WTC11 (cell line): ENCODE measurements at regions of chr7 and their contacts with region 1.

Region 1: DNA sequence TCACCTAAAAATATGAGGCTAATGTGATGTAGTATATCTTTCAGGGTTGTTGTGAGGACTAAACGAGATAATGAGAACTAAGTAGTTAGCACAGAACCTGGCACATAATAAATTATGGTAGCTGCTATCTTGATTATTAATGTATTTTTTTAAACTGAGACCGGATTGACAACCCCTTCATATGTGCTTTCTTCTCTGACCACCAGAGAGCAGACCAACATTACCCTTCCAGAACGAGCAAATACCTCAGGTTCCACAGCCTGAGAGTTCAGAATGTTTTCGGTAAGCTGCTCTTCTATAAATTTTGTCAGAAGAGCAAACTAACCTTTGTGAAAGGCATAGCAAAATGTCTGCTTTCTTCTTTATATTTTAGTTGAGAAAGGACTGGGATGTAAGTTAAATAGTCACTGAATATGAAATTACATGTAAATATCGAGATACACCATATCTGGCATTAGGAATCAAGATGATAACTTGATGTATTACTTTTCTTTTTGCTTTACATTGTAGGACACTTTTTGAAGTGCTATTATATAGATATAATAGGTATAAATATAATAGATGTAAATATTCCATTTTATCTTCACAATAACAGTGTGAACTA is 13.6 kb upstream of the BPGM start:
- DNase-seq: no peak
- ATAC-seq: peak; percentile 82
- H3K4me3 Mint-ChIP-seq: no peak overlapping the region
- H3K27ac Mint-ChIP-seq: no peak overlapping the region
- H3K4me1 Mint-ChIP-seq: no peaks in the 10 kb centered on the region
- H3K27me3 Mint-ChIP-seq: peaks cover 3% of the 10 kb centered on the region
- CTCF ChIP-seq: peak; percentile 37

Region 2: DNA sequence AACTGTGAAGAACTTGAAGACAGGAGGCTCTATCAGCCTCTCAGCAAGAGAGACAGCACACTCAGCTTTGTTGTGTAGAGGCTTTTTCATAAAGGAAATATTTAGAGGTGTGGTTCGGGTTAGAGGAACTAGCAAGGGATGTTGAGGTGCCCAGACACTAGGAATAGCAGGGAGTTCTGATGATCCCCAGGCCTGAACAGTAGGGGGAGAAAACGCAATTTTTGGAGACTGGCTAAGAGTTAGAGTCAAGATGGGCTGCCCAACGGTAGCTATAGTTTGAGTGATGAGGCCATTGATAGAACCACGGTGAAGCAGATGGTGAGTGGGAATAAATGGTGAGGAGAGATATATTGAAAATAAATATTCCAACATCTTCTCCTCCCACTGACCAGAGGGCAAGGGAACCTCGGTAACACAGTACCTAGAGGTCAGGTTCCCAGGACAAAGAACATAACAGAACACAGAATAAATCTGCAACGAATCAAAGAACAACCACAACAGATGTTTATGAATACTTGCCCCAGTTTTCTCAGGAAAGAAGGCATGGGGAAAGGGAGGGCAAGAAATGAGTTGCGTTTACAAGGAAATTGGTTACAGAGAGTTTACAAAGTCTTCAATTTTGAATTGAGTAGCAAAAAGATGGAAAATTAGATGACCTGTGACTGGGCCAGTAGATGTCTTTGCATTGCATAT is 10.6 kb before region 1 on chr7:
- CTCF ChIA-PET with region 1: interaction called, 17 read pairs
- POLR2A ChIA-PET with region 1: no interaction called
- DNase-seq: no peak
- ATAC-seq: peak; percentile 61
- H3K4me3 Mint-ChIP-seq: no peak overlapping the region
- H3K27ac Mint-ChIP-seq: no peak overlapping the region
- H3K4me1 Mint-ChIP-seq: peaks cover 6% of the 10 kb centered on the region; the same call in 1 of the 2 replicates
- H3K27me3 Mint-ChIP-seq: peaks cover 2% of the 10 kb centered on the region
- CTCF ChIP-seq: no peak

Region 3: DNA sequence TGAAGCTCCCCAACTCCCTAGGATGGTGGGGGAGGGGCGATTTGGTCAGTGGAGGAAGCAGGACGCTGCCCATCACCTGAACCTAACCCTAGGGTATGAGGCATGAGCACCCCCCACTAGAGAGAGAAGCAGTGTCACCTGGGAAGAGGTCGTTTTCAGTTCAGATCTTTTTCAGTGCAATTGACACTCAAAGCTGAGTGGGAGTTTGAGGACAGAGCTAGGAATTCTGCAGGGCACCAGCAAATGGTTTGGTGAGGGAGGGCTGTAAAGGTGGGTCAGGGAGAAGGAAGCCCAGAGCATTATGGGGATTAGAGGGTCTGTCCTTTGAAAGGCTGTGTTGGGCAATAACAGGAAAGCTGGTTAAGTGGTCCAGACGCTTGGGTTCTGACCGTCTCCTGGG is 24.5 kb after region 1 on chr7:
- CTCF ChIA-PET with region 1: interaction called, 13 read pairs
- POLR2A ChIA-PET with region 1: no interaction called
- DNase-seq: peak; percentile 15
- ATAC-seq: peak; percentile 39
- H3K4me3 Mint-ChIP-seq: no peak overlapping the region
- H3K27ac Mint-ChIP-seq: peak overlapping the region; percentile 28; the same call in 1 of the 2 replicates
- H3K4me1 Mint-ChIP-seq: peaks cover 14% of the 10 kb centered on the region
- H3K27me3 Mint-ChIP-seq: no peaks in the 10 kb centered on the region
- CTCF ChIP-seq: no peak

Region 4: DNA sequence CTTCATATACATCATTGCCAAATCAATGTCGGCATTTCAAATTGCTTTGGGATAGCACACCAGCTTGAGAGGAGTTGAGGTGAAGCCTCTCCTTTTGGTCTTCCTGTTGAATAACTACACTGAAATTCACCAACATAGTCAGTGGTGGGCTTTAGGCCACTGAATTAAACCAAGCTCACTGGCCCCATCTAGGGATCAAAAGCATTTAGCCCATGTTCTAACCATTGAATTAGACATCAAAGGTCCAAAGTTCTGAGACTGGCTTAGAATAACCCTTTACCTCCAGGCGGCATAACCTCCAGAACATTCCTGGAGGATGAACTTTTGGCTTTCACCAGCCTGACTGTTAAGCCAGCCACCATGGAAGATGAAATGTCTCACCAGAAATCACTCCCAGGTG is 68.2 kb after region 1 on chr7:
- CTCF ChIA-PET with region 1: interaction called, 18 read pairs
- POLR2A ChIA-PET with region 1: no interaction called
- DNase-seq: no peak
- ATAC-seq: peak; percentile 72
- H3K4me3 Mint-ChIP-seq: no peak overlapping the region
- H3K27ac Mint-ChIP-seq: no peak overlapping the region
- H3K4me1 Mint-ChIP-seq: peaks cover 24% of the 10 kb centered on the region
- H3K27me3 Mint-ChIP-seq: no peaks in the 10 kb centered on the region
- CTCF ChIP-seq: 0 out of 2 replicates have a peak, but pooled peaks have one; percentile 32

Region 5: DNA sequence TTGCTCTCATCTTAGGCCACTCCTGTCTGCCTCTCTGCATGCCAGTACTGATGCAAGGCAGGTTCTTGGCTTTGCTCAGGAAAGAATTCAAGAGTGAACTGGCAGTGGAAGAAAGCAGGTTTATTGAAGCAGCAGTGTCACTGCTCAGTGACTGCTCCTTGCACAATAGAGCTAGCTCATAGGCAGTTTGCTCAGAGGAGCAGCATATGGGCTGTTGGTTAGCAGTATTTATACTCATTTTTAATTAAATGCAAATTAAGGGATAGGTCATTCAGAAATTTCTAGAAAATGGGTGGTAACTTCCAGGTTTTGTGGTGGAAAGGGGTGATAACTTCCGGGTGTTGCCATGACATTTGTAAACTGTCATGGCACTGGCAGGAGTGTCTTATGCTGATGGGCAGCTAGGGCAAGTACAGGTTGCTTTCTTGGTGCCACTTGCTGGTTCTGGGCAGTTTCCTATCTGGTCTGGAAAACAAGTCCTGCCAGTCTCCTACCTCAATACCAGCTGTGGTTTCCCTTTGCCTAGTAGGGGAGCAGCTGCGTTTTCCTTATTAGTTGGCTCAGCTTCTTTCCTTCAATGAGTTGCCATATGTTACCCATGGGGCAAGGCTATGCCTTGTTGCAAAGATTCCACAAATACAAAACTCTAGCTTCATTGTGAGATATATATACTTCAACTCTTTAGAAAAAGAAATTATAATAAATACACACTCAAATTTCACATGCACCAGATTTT is 81.6 kb after region 1 on chr7:
- CTCF ChIA-PET with region 1: no interaction called
- POLR2A ChIA-PET with region 1: no interaction called
- DNase-seq: no peak
- ATAC-seq: no peak
- H3K4me3 Mint-ChIP-seq: no peak overlapping the region
- H3K27ac Mint-ChIP-seq: no peak overlapping the region
- H3K4me1 Mint-ChIP-seq: peaks cover 10% of the 10 kb centered on the region
- H3K27me3 Mint-ChIP-seq: no peaks in the 10 kb centered on the region; the same call in 1 of the 2 replicates
- CTCF ChIP-seq: no peak

Region 6: DNA sequence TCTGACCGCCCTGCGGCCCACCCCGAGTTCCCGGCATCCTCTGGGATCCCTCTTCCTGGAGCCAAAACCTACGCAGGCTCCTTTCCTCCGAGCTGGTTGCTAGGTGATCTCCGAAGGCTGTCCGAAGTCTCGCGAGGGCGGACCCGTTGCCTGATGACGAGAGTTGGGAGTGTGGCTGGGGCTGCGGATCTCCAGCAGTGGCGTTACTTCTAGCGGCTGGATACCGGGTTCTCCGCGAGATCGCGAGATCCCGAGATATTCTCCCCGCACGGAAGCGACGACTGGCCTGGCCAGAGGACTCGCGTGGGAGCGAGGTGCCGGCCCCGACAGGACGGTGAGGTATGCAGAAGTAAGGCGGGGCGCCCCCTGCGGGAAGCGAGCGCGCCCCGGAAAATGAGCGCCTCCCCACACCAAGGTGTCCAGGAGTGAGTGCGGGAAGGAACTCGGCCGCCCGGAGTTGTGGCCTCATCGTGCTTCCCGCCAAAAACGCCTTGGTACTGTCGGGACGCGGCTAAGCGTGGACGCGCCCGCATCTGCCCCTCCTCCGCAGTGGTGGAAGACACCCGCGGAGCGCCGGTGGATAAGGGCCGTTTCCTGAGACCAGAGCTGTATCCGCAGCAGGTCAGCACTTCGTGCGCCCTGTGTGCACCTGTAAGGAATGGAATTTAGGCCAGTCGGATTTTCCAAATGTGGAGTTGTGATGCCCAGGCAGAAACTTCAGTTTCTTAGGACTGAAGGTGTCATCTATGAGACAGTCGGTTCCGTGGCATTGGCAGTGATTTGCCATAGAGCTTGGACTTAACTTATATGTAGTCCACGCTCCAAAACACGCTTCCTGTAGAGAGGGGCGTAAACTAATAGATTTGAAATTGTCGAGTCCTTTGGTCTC is 353.6 kb after region 1 on chr7 and contains the start of gene AGBL3:
- CTCF ChIA-PET with region 1: interaction called, 11 read pairs
- POLR2A ChIA-PET with region 1: no interaction called
- DNase-seq: peak; percentile 96
- ATAC-seq: peak; percentile 99
- H3K4me3 Mint-ChIP-seq: peak within 1 kb of the TSS; percentile 91
- H3K27ac Mint-ChIP-seq: peak within 1 kb of the TSS; percentile 91
- H3K4me1 Mint-ChIP-seq: peaks cover 12% of the 10 kb centered on the region
- H3K27me3 Mint-ChIP-seq: no peaks in the 10 kb centered on the region; the same call in 1 of the 2 replicates
- CTCF ChIP-seq: 0 out of 2 replicates have a peak, but pooled peaks have one; percentile 17
- total RNA-seq, gene AGBL3: 1.6 to 2.1 TPM (median 2.0 TPM) in 3 replicates